ENCODE measurements at regions of chr1 and their contacts with region 1.

Region 1: DNA sequence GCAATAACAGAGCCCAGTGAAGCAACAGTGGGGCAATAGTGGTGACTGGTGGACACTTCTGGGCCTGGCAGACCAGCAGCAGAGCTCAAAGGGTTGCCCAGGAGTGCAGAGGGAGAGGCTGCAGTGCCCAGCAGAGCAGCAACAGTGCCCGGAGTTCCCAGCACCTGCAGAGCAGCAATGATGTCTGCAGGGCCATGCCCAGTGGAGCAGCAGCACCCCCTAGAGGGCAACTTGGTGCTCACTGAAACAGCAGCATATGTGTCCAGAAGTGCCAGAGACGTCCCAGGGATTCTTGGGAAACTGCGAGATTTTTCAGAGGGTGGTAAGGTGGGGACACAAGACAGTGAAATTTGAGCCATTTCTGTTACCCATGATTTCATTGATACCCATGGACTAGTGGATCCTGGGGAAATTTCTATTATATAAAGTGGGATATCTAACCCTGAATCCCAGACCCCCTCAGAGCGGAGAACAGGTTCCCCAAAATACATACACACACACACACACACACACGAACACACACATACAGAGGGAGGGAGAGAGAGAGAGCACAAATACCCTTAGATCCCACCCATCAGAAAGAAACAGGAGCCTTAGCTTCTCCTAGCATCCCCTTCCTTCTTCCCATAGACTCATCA is 156.9 kb upstream of the GJB5 start:
- DNase-seq: peak; percentile 94
- ATAC-seq: peak; percentile 94
- H3K4me3 Mint-ChIP-seq: no peak overlapping the region
- H3K27ac Mint-ChIP-seq: no peak overlapping the region
- H3K4me1 Mint-ChIP-seq: peaks cover 9% of the 10 kb centered on the region
- H3K27me3 Mint-ChIP-seq: peaks cover 9% of the 10 kb centered on the region
- CTCF ChIP-seq: peak; percentile 93

Region 2: DNA sequence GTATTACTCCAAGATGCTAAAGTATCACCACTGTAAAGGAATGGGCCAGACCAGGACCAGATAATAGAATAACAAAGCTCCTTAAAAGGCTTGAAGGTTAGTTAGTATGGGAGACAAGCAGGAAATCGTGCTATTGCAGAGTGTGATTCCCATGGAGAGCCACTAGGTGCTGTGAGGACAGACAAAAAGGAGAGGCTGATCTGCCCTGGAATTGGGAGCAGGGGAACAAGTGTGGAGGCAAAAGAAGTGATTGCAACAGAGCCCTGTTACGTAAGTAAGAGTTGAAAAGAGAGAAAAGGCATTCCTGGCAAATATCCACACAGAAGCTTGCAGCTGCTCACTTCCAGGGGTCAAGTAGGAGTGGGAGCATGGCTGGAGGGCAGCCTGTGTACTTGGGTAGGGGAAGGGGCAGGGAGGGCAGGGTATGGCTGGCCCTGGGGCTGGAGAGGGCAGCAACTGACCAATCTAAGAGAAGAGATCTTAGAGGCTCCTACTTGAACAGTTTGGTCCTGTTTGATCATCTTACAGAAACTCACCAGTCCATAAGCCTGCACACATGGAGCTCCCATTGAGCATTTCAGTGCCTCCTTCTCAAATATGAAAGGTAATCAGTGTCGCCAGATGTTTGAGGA is 50.8 kb before region 1 on chr1:
- CTCF ChIA-PET with region 1: interaction called, 17 read pairs
- POLR2A ChIA-PET with region 1: no interaction called
- DNase-seq: peak; percentile 35
- ATAC-seq: peak; percentile 97
- H3K4me3 Mint-ChIP-seq: no peak overlapping the region
- H3K27ac Mint-ChIP-seq: no peak overlapping the region
- H3K4me1 Mint-ChIP-seq: peaks cover 4% of the 10 kb centered on the region; the same call in 1 of the 2 replicates
- H3K27me3 Mint-ChIP-seq: peaks cover 10% of the 10 kb centered on the region
- CTCF ChIP-seq: peak; percentile 39

Region 3: DNA sequence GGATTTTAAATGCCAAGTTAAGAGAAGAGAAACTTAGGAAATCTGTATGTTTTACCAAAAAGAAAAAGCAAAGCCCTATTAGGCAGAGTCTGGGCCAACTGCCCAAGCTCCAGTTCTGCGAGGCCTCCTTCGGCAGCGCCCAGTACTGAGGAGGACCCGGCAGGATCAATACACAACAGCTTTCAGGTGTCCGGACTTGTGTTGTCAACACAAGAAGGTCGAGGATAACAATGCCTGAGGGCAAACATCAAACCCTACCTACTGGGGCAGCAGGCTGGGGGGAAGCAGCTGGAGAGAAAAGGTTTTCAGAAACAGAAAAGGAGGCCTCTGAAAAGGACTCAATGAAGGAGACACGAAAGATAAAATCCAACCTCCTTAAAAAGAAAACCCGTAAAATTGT is 58.7 kb after region 1 on chr1:
- CTCF ChIA-PET with region 1: no interaction called
- POLR2A ChIA-PET with region 1: no interaction called
- DNase-seq: no peak
- ATAC-seq: peak; percentile 57
- H3K4me3 Mint-ChIP-seq: no peak overlapping the region
- H3K27ac Mint-ChIP-seq: no peak overlapping the region; the same call in 1 of the 2 replicates
- H3K4me1 Mint-ChIP-seq: peaks cover 44% of the 10 kb centered on the region
- H3K27me3 Mint-ChIP-seq: peaks cover 3% of the 10 kb centered on the region; the same call in 1 of the 2 replicates
- CTCF ChIP-seq: no peak